HCT116 (cell line): ENCODE measurements at regions of chr7 and their contacts with region 1.

Region 1: GRCh38 chr7:141654551-141654950 is 47.4 kb downstream of the DENND11 start:
- DNase-seq: peak; percentile 41
- ATAC-seq: peak; percentile 89
- H3K4me3 ChIP-seq: no peak overlapping the region
- H3K27ac ChIP-seq: no peak overlapping the region
- H3K4me1 ChIP-seq: no peaks in the 10 kb centered on the region
- H3K27me3 ChIP-seq: no peaks in the 10 kb centered on the region
- CTCF ChIP-seq: peak; percentile 76 to 78 (median 78); a peak in 5 of 6 replicates
- POLR2A ChIP-seq: no peak
- RAD21 ChIP-seq: peak; percentile 71

Region 2: DNA sequence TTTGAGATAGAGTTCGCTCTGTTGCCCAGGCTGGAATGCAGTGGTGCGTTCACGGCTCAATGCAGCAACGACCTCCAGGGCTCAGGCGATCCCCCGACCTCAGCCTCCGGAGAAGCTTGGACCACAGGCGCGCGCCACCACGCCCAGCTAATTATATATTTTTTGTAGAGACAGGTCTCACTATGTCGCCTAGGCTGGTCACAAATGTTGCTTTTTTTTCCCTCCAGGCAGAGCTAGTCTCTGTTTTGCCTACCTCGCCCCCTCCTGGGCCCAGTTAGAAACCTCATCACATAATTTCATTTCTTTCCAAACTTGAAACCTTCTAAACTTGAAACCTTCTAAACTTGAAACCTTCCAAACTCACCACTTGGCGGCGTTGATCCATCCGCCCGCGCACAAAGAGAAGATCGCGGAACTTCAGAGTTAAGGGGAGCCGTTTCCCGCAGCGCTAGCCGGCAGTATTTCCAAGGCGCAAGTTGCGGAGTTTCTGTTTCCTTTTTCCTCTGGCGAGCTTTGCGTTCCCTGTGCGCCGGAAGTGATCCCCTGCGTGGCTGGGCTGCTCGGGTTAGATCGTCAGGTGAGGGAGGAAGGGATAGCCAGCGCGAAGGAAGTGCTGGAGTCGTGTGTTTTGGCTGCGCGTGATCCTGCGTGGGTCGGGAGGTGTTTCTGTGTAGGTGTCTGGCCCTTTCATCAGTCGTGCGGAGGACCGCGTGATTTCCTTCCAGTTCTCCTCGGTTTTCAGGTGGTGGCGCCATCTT is 83.5 kb after region 1 on chr7 and contains the start of gene SSBP1:
- CTCF ChIA-PET with region 1: interaction called, 21 read pairs
- POLR2A ChIA-PET with region 1: interaction called, 3 read pairs
- RAD21 ChIA-PET with region 1: no interaction called
- intact Hi-C with region 1: loop called (anchors 1 kb)
- DNase-seq: peak; percentile 95
- ATAC-seq: peak; percentile 88
- H3K4me3 ChIP-seq: peak within 1 kb of the TSS; percentile 86 to 88
- H3K27ac ChIP-seq: peak within 1 kb of the TSS; percentile 66
- H3K4me1 ChIP-seq: peaks cover 4 to 13% of the 10 kb centered on the region in 2 experiments; a peak in 3 of 4 replicates
- H3K27me3 ChIP-seq: no peaks in the 10 kb centered on the region
- CTCF ChIP-seq: peak; percentile 68 to 97 (median 78)
- POLR2A ChIP-seq: peak; percentile 81
- RAD21 ChIP-seq: peak; percentile 64
- total RNA-seq, gene SSBP1: 171 TPM

Region 3: DNA sequence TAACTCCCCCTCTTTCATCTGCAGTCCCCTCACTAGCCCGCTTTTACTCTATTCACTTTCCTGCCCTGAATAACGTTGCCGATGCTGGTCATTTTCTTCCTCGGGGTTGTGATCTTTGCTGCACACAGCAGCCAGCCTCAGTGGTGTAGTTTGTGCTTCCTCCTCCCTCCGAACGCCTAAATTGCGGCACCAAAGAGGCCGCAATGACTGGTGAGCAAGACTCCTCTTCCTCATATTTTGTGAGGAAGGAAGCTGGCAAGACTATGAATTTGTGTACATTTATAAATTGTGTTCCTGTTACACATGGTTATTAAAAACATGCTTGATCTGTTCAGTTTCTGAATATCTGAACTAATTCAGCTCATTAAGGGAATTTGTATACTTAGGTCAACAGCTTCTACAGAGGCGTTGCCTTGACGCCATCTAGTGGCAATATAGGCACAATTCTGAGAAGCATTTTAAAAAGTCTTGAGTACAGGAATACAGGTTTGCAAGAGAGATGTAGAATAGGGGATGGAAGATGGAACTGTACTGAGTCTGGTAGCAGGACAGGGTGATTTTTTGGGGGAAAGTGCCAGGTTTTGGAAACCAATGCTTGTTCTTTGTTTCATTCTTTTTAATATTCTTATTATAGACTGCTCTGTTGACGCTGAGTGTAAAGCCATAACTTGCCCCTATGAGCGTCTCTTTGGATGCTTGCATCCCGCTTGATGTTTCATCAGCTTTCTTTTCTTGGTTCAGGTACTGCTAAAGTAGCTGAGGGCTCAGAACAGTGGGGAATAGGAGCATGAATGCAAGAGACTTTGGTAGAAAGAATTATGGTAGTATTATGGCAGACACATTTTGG is 131.4 kb after region 1 on chr7:
- CTCF ChIA-PET with region 1: interaction called, 11 read pairs
- POLR2A ChIA-PET with region 1: no interaction called
- RAD21 ChIA-PET with region 1: no interaction called
- intact Hi-C with region 1: loop called (anchors 5 kb)
- DNase-seq: peak; percentile 36
- ATAC-seq: peak; percentile 86
- H3K4me3 ChIP-seq: no peak overlapping the region
- H3K27ac ChIP-seq: no peak overlapping the region
- H3K4me1 ChIP-seq: no peaks in the 10 kb centered on the region
- H3K27me3 ChIP-seq: no peaks in the 10 kb centered on the region
- CTCF ChIP-seq: peak; percentile 45 to 91 (median 80); a peak in 5 of 6 replicates
- POLR2A ChIP-seq: no peak
- RAD21 ChIP-seq: peak; percentile 60

Region 4: DNA sequence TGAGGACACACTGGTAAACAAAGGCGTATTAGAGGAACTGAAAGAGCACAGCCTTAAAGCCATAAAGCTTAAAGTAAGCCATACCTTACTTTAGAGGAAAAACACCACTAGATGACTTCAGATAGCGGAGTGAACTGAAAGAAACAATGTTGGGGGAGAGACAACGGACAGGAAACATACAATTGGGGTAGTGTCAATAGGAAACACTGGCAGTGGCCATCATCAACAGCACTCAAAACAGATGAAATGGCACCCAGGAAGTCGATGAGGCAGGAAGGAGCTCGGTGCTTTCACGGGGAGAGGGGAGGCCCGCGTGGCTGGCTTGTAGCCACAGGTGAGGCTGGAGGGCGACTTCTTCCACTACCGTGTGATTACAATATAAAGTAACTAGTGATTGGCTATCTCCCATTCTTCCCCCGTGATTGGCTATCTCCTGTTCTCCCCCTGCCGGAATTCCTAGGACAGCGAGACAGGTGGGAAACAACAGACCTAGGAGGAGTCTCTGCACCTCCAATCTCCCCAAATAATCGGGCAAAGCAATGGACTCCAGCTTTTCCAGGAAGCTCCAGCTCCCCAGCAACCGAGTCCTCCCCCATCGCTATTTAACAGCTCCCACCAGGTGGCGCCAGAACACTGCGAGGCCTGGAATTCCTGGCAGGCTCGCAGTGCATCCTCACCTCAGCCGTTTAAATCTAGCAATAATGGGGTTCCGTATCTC is 321.4 kb after region 1 on chr7:
- CTCF ChIA-PET with region 1: no interaction called
- POLR2A ChIA-PET with region 1: no interaction called
- RAD21 ChIA-PET with region 1: no interaction called
- intact Hi-C with region 1: loop called (anchors 5 kb)
- DNase-seq: peak; percentile 60
- ATAC-seq: peak; percentile 96
- H3K4me3 ChIP-seq: peak overlapping the region; percentile 17 to 30
- H3K27ac ChIP-seq: no peak overlapping the region
- H3K4me1 ChIP-seq: peaks cover 0 to 5% of the 10 kb centered on the region in 2 experiments; a peak in 2 of 4 replicates
- H3K27me3 ChIP-seq: no peaks in the 10 kb centered on the region
- CTCF ChIP-seq: peak; percentile 78 to 98 (median 92)
- POLR2A ChIP-seq: no peak
- RAD21 ChIP-seq: peak; percentile 93

Region 5: GRCh38 chr7:142188846-142189245 is 534.3 kb after region 1 on chr7:
- CTCF ChIA-PET with region 1: no interaction called
- POLR2A ChIA-PET with region 1: no interaction called
- RAD21 ChIA-PET with region 1: no interaction called
- intact Hi-C with region 1: loop called (anchors 2 kb)
- DNase-seq: peak; percentile 16
- ATAC-seq: peak; percentile 40; the same call in 1 of the 2 replicates
- H3K4me3 ChIP-seq: no peak overlapping the region
- H3K27ac ChIP-seq: no peak overlapping the region
- H3K4me1 ChIP-seq: no peaks in the 10 kb centered on the region
- H3K27me3 ChIP-seq: peaks cover 5% of the 10 kb centered on the region
- CTCF ChIP-seq: peak; percentile 5 to 50 (median 48); a peak in 3 of 6 replicates
- POLR2A ChIP-seq: no peak
- RAD21 ChIP-seq: peak; percentile 76